Heart left ventricle (tissue), 16 donors: ENCODE measurements at regions of chr14 and their contacts with region 1.

Region 1: DNA sequence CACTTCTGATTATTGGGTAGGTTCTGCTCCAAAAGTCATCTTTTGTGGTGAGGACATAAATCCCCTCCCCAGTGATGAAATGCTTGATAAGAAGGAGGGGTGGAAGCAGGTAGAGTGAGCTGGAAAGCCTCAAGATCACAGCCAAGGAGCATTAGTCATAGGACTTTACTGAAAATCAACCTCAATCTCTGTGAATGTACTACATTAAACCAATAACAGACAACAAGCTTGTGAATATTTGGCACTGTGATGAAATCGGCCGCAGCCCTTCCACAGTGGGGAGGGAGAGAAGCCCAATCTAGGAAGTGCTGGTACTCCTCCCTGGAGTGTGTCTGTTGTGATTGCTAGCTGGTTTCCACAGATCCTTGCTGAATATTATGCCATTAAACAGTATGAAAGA is 41.2 kb upstream of the PTCSC3 start:
- DNase-seq: no peak
- ATAC-seq: no peak
- H3K4me3 ChIP-seq: no peak overlapping the region
- H3K27ac ChIP-seq: no peak overlapping the region
- H3K4me1 ChIP-seq: no peaks in the 10 kb centered on the region
- H3K27me3 ChIP-seq: peaks cover 0 to 30% (median 4%) of the 10 kb centered on the region in 9 donors
- CTCF ChIP-seq: no peak
- POLR2A ChIP-seq: no peak

Region 2: DNA sequence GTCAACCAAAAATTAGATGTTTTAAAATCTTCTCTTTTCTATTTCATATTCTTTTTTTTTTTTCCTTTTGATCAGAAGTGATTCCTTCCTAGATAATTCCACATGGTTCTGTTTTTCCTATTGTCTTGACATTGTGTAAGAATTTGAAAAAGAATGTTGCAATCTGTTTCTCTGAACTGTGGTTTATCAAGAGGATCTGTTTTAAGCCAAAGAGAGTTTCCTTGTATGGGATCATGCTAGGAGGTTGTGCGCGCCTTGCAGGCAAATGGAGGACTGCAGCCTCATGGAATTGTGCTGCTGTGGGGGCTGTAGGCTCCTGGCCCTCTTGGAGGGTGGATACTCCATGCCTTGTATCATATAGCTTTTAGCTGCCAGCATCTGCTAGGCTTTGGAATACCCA is 146.0 kb after region 1 on chr14:
- intact Hi-C with region 1: loop called in 1 of 10 experiments (anchors 10 kb)
- DNase-seq: no peak
- ATAC-seq: no peak
- H3K4me3 ChIP-seq: no peak overlapping the region
- H3K27ac ChIP-seq: no peak overlapping the region
- H3K4me1 ChIP-seq: peaks cover 0 to 8% (median 0%) of the 10 kb centered on the region in 12 donors
- H3K27me3 ChIP-seq: peaks cover 0 to 10% (median 0%) of the 10 kb centered on the region in 9 donors
- CTCF ChIP-seq: no peak
- POLR2A ChIP-seq: no peak

Region 3: GRCh38 chr14:36373982-36374673 is 156.4 kb after region 1 on chr14:
- intact Hi-C with region 1: loop called in 2 of 10 experiments (anchors 10 kb)
- DNase-seq: peak; percentile 35 to 62 (median 44)
- ATAC-seq: peak in 3 of 4 donors; percentile 49 to 81 (median 76)
- H3K4me3 ChIP-seq: no peak overlapping the region
- H3K27ac ChIP-seq: no peak overlapping the region
- H3K4me1 ChIP-seq: no peaks in the 10 kb centered on the region
- H3K27me3 ChIP-seq: peaks cover 0 to 6% (median 0%) of the 10 kb centered on the region in 9 donors
- CTCF ChIP-seq: peak; percentile 50 to 79 (median 70)
- POLR2A ChIP-seq: no peak